ENCODE measurements at regions of chr1 and their contacts with region 1.

Region 1: DNA sequence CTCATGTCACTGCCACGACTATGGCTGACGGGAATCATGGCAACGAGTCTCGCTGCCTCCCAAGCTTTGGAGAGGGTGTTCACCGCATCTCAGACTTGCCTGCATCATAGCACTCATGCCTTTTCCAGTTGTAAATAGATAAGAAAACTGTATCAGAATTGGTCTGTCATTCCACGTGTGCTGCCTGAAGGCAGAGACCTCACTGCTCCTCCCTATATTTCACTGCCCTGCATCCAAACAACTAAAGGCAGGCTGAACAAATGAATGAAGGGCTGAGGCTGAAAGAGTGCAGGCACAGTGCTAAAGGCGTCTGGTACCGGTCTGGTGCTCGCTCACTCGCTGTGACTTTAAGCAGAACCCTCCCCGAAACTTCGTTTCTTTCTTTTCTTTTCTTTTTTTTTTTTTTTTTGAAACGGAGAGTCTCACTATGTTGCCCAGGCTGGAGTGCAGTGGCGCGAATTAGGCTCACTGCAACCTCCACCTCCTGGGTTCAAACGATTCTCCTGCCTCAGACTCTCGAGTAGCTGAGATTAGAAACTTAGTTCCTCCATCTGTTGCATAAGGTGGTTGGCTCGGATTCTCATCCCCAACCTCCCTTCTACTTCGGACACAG is 542 bp downstream of the EIF2B3 start:
- DNase-seq: no peak
- H3K4me3 ChIP-seq: peak overlapping the region; percentile 81
- H3K27ac ChIP-seq: peak overlapping the region; percentile 48
- H3K4me1 ChIP-seq: peaks cover 5% of the 10 kb centered on the region
- H3K27me3 ChIP-seq: no peaks in the 10 kb centered on the region
- CTCF ChIP-seq: no peak

Region 2: DNA sequence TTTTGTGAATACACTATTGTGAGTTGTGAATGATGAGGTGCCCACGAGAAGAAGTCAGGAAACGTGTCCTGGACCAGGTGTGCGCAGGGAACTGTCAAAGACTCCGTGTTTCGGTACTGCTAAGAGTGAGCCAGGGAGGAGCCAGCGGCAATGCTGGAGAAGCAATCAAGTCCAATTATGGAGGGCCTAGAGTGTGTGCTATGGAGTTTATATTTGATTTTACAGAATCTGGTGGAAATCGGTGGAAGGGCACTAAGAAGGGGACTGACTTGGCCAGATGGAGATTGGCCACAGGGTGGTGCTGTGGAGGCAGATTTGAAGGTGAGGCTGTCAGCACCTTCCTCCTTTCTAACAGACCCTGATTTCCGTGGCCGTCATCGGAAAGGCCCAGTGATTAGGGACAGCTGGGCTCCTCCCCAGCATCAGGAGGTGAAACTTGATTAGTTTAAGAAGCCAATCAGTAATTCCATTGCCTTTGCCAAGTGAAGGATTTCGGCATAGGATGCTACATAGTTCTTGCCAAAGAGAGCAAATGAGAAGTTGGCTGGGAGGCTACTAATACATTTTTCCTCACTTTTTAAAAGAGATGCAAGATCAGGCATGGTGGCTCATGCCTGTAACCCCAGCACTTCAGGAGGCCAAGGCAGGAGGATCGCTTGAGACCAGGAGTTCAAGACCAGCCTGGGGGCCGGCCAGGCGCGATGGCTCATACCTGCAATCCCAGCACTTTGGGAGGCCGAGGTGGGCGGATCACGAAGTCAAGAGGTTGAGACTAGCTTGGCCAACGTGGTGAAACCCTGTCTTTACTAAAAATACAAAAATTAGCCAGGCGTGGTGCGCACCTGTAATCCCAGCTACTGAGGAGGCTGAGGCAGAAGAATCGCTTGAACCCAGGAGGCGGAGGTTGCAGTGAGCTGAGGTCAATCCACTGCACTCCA is 149.8 kb before region 1 on chr1:
- CTCF ChIA-PET with region 1: interaction called, 3 read pairs
- POLR2A ChIA-PET with region 1: no interaction called
- intact Hi-C with region 1: loop called (anchors 10 kb)
- DNase-seq: peak; percentile 82
- H3K4me3 ChIP-seq: no peak overlapping the region
- H3K27ac ChIP-seq: no peak overlapping the region
- H3K4me1 ChIP-seq: peaks cover 8% of the 10 kb centered on the region
- H3K27me3 ChIP-seq: no peaks in the 10 kb centered on the region
- CTCF ChIP-seq: peak; percentile 93

Region 3: DNA sequence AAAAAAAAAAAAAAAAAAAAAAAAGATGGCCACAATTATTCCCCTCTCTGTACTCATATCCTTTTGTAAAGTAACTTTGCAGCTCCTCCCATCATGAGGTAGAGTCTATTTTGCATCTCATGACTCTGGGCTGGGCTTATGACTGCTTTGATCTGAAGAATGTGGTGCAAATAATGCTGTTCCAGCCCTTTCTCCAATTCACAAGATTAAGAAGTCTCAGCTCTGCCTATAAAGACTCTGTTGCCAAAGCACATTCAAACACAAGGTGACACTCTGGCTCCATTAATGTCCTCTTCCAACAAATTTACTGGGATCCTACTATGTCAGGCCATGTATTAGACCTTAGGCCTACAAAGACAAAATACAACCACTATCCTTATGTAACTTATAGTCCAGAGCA is 78.0 kb before region 1 on chr1:
- CTCF ChIA-PET with region 1: no interaction called
- POLR2A ChIA-PET with region 1: no interaction called
- intact Hi-C with region 1: no loop called
- DNase-seq: no peak
- H3K4me3 ChIP-seq: no peak overlapping the region
- H3K27ac ChIP-seq: no peak overlapping the region
- H3K4me1 ChIP-seq: no peaks in the 10 kb centered on the region
- H3K27me3 ChIP-seq: no peaks in the 10 kb centered on the region
- CTCF ChIP-seq: no peak

Measured in A673 (cell line).